ENCODE measurements at regions of chr14 and their contacts with region 1.

Region 1: GRCh38 chr14:51094901-51095853 is at the start of gene TRIM9:
- DNase-seq: peak; percentile 97
- ATAC-seq: peak; percentile 97
- H3K4me3 Mint-ChIP-seq: peak within 1 kb of the TSS; percentile 79
- H3K27ac Mint-ChIP-seq: peak within 1 kb of the TSS; percentile 79
- H3K4me1 Mint-ChIP-seq: peaks cover 15% of the 10 kb centered on the region
- H3K27me3 Mint-ChIP-seq: peaks cover 10% of the 10 kb centered on the region
- total RNA-seq, gene TRIM9: 2.4 TPM

Region 2: GRCh38 chr14:50943943-50944646 is 151.1 kb before region 1 on chr14 and contains the start of gene PYGL:
- CTCF ChIA-PET with region 1: no interaction called
- POLR2A ChIA-PET with region 1: no interaction called
- intact Hi-C with region 1: loop called (anchors 2 to 10 kb)
- DNase-seq: peak; percentile 52
- ATAC-seq: peak; percentile 65
- H3K4me3 Mint-ChIP-seq: peak within 1 kb of the TSS; percentile 70
- H3K27ac Mint-ChIP-seq: no peak within 1 kb of the TSS
- H3K4me1 Mint-ChIP-seq: peaks cover 13% of the 10 kb centered on the region
- H3K27me3 Mint-ChIP-seq: peaks cover 33% of the 10 kb centered on the region
- total RNA-seq, gene PYGL: 0.62 to 0.67 TPM

Region 3: DNA sequence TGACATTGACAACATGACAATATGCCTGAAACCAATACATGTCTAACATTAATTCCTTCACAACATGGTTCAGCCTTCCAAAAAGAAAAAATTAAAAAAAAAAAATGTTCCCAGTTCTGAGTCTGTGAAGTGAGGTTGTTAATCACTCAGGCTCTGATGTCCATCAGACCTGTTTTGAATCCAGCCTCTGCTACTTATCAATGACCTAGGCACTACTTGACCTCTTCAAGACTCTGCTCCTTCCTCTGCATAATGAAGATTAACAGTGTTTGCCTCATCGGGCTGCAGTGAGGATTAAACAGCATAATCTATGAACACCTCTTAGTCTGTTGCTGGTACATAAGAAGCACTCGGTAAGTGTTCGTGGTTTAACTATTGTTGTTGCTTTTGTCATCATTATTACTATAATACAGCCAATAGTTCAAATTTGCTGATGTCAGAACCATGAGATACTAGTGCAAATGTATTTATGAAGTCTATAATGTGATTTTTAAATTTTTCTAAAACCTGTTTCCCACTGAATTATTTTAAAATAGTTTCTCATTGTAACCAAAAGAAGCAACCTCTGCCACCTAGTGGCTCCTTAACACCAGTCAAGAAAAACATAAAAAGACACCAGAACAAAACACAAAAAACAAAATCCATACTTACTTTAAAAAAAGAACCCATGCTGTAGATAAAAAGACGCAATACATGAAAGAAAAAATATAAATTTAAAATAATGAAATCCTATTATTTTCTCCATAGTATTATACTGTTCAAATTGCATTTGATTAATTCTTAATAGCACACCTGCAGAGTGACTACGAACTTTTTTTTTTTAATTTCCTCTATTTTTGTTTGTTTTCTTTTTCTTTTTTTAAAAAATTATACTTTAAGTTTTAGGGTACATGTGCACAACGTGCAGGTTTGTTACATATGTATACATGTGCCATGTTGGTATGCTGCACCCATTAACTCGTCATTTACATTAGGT is 124.6 kb after region 1 on chr14:
- CTCF ChIA-PET with region 1: interaction called, 4 read pairs
- POLR2A ChIA-PET with region 1: no interaction called
- intact Hi-C with region 1: loop called in 1 of 2 experiments (anchors 5 kb)
- DNase-seq: no peak
- ATAC-seq: no peak
- H3K4me3 Mint-ChIP-seq: no peak overlapping the region
- H3K27ac Mint-ChIP-seq: no peak overlapping the region
- H3K4me1 Mint-ChIP-seq: no peaks in the 10 kb centered on the region
- H3K27me3 Mint-ChIP-seq: no peaks in the 10 kb centered on the region

Region 4: GRCh38 chr14:51239813-51240803 is 144.9 kb after region 1 on chr14 and contains the start of gene TMX1:
- CTCF ChIA-PET with region 1: no interaction called
- POLR2A ChIA-PET with region 1: interaction called, 4 read pairs
- intact Hi-C with region 1: loop called (anchors 1 kb)
- DNase-seq: peak; percentile 94
- ATAC-seq: peak; percentile 93
- H3K4me3 Mint-ChIP-seq: no peak within 1 kb of the TSS
- H3K27ac Mint-ChIP-seq: no peak within 1 kb of the TSS
- H3K4me1 Mint-ChIP-seq: peaks cover 15% of the 10 kb centered on the region
- H3K27me3 Mint-ChIP-seq: no peaks in the 10 kb centered on the region
- total RNA-seq, gene TMX1: 38.8 to 55.9 TPM